ENCODE measurements at regions of chr11 and their contacts with region 1.

Region 1: DNA sequence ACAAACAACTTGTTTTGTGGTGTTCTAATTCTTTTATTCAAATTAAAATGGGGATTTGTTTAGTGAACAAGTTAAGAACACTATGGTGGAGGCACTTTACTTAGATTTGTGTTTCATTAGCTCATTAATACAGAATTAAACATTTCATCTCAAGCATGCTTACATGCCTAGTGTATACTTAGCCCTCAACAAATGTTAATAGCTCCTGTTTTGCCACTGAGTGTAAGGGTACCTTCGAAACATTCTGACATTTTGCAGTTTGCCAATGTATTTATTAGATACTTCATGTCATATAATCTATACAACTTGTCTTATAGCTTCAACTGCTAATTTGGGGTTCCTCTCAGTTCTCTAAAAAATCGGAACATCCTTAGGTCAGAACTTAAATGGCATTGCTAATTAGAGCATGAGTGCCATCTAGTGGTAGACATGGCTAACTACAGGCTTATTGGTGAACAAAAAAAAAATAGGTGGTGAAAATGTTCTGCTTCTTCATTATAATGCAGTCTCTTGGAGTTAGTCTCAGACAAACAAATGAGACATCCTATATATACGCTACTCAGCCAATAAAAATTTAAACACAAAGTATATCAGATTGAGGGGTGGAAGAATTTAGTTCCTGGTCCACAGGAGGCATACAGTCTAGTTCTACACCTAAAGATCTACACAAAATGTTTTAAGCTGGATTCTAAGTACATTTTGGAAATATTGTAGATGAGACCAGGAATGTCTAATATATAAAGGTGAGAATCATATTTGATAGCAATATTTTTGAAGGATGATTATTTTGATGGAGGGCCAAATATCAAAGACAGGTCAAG is 4.9 kb upstream of the CNTN5 start:
- DNase-seq: peak in 1 of 2 experiments; percentile 50
- H3K4me3 ChIP-seq: no peak overlapping the region
- H3K27ac ChIP-seq: no peak overlapping the region
- H3K4me1 ChIP-seq: no peaks in the 10 kb centered on the region
- H3K27me3 ChIP-seq: peaks cover 22% of the 10 kb centered on the region
- CTCF ChIP-seq: peak; percentile 98

Region 2: DNA sequence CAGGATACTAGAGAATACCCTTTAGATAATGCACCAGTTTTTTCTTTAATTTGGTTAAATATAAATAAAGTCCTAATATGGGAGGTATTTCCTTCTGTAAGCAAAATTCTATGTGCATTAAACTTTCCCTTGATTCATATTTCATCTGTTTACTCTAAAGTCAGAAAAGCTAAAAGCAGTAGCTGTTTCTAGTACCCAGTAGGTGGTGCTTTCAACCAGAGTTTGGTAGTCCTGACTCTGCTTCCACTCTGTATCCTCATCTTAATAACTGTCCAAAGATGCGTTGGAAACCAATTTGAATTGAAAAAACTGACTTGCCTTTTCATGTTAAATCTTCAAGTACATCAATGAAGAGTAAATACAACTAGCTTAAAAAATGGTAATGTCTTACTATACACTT is 1560.9 kb before region 1 on chr11:
- CTCF ChIA-PET with region 1: no interaction called
- POLR2A ChIA-PET with region 1: no interaction called
- intact Hi-C with region 1: loop called (anchors 2 kb)
- DNase-seq: no peak
- H3K4me3 ChIP-seq: no peak overlapping the region
- H3K27ac ChIP-seq: no peak overlapping the region
- H3K4me1 ChIP-seq: no peaks in the 10 kb centered on the region
- H3K27me3 ChIP-seq: no peaks in the 10 kb centered on the region
- CTCF ChIP-seq: peak; percentile 43; the same call in 1 of the 2 replicates

Region 3: GRCh38 chr11:99739464-99740089 is 723.7 kb after region 1 on chr11:
- CTCF ChIA-PET with region 1: no interaction called
- POLR2A ChIA-PET with region 1: no interaction called
- intact Hi-C with region 1: loop called (anchors 2 kb)
- DNase-seq: peak in 1 of 2 experiments; percentile 3
- H3K4me3 ChIP-seq: no peak overlapping the region
- H3K27ac ChIP-seq: no peak overlapping the region
- H3K4me1 ChIP-seq: no peaks in the 10 kb centered on the region
- H3K27me3 ChIP-seq: no peaks in the 10 kb centered on the region
- CTCF ChIP-seq: peak; percentile 81